Activated CD4-positive, alpha-beta T cell treated with anti-CD3 and anti-CD28 coated beads, Interleukin-2, amount 10 ng/mL, durations not matched to agents 24 days and 14 days (primary cell): ENCODE measurements at regions of chr1 and their contacts with region 1.

Region 1: GRCh38 chr1:94061513-94062443 is 59.2 kb downstream of the ABCA4 start:
- DNase-seq: peak; percentile 76
- H3K4me3 Mint-ChIP-seq: no peak overlapping the region
- H3K27ac Mint-ChIP-seq: no peak overlapping the region
- H3K4me1 Mint-ChIP-seq: no peaks in the 10 kb centered on the region
- H3K27me3 Mint-ChIP-seq: peaks cover 22% of the 10 kb centered on the region

Region 2: GRCh38 chr1:94101541-94102525 is 40.1 kb after region 1 on chr1:
- intact Hi-C with region 1: no loop called
- DNase-seq: no peak
- H3K4me3 Mint-ChIP-seq: no peak overlapping the region
- H3K27ac Mint-ChIP-seq: no peak overlapping the region
- H3K4me1 Mint-ChIP-seq: no peaks in the 10 kb centered on the region
- H3K27me3 Mint-ChIP-seq: peaks cover 25% of the 10 kb centered on the region

Region 3: DNA sequence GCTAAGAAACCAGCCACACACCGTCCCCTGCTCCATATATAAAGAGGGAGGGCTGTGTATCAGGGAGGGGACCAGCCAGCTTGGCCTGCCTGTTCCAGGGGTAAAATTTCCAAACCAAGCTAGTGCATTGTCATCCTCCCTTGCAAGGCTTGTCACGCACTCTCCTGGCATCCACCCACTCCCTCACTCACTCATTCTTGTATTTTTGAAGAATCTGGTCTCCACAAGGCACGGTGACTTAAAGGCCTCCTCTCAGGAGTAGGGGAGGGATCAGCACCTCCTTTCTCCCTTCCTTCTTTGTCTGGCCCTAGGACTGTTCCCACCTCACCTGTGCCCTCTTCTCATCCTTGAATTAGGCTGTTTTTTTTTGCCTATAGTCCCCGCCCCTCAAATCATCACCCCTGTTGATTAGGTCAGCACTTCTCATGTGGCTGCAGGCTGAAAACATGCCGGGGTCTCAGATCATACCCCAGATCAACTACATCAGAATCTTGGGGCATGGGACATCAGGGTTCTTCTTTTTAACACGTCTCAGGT is 54.2 kb after region 1 on chr1:
- intact Hi-C with region 1: no loop called
- DNase-seq: no peak
- H3K4me3 Mint-ChIP-seq: no peak overlapping the region
- H3K27ac Mint-ChIP-seq: no peak overlapping the region
- H3K4me1 Mint-ChIP-seq: no peaks in the 10 kb centered on the region
- H3K27me3 Mint-ChIP-seq: no peaks in the 10 kb centered on the region

Region 4: GRCh38 chr1:94299627-94300552 is 238.1 kb after region 1 on chr1:
- intact Hi-C with region 1: no loop called
- DNase-seq: no peak
- H3K4me3 Mint-ChIP-seq: no peak overlapping the region
- H3K27ac Mint-ChIP-seq: no peak overlapping the region
- H3K4me1 Mint-ChIP-seq: no peaks in the 10 kb centered on the region
- H3K27me3 Mint-ChIP-seq: no peaks in the 10 kb centered on the region

Region 5: DNA sequence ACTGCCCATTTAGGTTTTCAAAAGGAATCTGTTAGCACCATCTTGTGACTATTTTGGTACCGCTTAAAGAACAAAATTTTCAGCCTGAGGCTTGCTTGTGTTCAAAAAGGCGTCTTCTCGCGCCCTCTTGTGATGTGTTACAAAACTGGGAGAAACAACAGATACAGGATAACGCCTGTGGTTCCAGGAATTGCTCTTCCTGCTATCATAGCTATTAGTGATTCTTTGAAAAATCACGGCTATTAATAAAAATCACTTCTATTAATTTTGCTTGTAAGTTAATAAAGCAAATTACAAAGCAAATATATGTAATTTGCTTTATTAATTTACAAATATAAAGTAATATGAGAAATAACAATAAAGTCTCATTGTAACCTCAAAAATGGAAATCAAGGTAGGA is 274.2 kb after region 1 on chr1:
- intact Hi-C with region 1: loop called (anchors 10 kb)
- DNase-seq: peak; percentile 68
- H3K4me3 Mint-ChIP-seq: no peak overlapping the region
- H3K27ac Mint-ChIP-seq: no peak overlapping the region
- H3K4me1 Mint-ChIP-seq: no peaks in the 10 kb centered on the region
- H3K27me3 Mint-ChIP-seq: peaks cover 17% of the 10 kb centered on the region

Region 6: DNA sequence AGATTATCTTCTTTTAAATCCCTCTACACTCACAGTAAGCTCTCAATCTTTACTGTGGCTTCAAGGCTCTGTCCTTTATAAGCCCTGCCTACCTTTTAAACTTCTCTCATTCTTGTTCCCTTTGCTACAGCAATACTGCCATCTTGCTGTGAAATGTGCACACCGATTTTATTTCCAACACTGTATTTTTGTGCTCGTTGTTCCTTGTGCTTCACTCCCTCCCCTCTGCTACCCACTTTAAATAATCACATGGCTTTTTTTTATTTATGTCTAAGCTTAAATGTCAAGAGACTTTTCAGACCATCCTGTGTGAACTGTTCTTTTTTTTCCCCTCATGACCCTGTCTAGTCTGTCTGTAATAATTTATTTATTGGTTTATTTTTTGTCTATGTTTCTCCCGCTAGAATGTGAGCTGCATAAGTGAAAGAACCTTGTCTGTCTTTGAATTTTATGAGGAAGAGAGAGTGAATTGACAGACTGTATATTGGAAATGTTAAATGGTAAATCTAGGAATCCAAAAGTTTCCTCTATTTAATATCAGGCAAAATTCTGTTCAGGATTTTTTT is 402.1 kb after region 1 on chr1:
- intact Hi-C with region 1: loop called (anchors 1 kb)
- DNase-seq: peak; percentile 76
- H3K4me3 Mint-ChIP-seq: no peak overlapping the region
- H3K27ac Mint-ChIP-seq: no peak overlapping the region
- H3K4me1 Mint-ChIP-seq: peaks cover 1% of the 10 kb centered on the region
- H3K27me3 Mint-ChIP-seq: no peaks in the 10 kb centered on the region